Transverse colon (tissue), 4 donors: ENCODE measurements at regions of chr7 and their contacts with region 1.

Region 1: GRCh38 chr7:716636-717035 is 9.9 kb upstream of the DNAAF5 start:
- DNase-seq: no peak
- H3K4me3 ChIP-seq: no peak overlapping the region
- H3K27ac ChIP-seq: no peak overlapping the region
- H3K4me1 ChIP-seq: peaks cover 0 to 7% (median 6%) of the 10 kb centered on the region in 4 donors
- H3K27me3 ChIP-seq: peaks cover 10% of the 10 kb centered on the region
- CTCF ChIP-seq: no peak
- EP300 ChIP-seq: no peak
- POLR2A ChIP-seq: no peak

Region 2: DNA sequence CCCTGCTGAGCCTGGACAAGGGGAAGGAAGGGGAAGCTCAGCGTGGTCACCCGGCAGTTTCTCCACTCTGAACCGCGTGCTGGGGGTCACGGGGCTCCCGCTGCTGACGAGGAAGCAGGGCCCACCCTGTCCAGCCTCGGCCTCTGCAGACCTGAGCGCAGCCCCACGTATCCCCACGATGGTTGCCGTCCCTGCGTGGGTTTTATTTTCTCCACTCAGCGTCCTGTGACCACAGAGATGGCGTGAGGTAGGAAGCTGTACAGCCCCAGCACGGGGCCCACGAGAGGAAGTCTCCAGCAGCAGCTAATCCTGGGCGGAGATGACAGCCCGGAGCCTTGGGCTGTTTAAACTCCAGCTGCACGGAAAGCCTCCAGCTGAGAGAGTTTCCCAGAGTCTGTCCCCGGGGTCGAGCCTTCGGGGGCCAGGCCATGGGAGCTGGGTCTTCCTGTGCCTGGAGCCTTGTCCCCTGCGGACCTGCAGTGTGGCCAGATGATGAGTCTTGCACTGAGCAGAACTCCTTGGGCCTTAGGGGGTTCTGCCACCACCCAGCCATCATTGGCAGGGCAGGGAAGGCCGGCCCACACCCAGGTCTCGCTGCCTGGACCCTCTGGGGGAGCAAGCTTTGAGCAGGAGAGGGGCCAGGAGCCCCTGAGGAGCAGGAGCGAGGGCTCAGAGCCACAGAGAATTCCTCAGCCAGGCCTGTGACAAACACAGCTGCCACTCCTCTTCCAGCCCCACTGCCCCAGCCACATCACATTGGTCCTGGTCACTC is 597.1 kb before region 1 on chr7:
- in situ Hi-C with region 1: no loop called
- intact Hi-C with region 1: no loop called
- DNase-seq: peak; percentile 41
- H3K4me3 ChIP-seq: no peak overlapping the region
- H3K27ac ChIP-seq: peak overlapping the region; percentile 15 to 65 (median 32)
- H3K4me1 ChIP-seq: peaks cover 0 to 26% (median 5%) of the 10 kb centered on the region in 4 donors
- H3K27me3 ChIP-seq: peaks cover 19% of the 10 kb centered on the region
- CTCF ChIP-seq: no peak
- EP300 ChIP-seq: no peak
- POLR2A ChIP-seq: no peak

Region 3: GRCh38 chr7:341841-342638 is 374.6 kb before region 1 on chr7:
- in situ Hi-C with region 1: no loop called
- intact Hi-C with region 1: no loop called
- DNase-seq: peak; percentile 69
- H3K4me3 ChIP-seq: no peak overlapping the region
- H3K27ac ChIP-seq: peak overlapping the region; percentile 45 to 79 (median 74)
- H3K4me1 ChIP-seq: peaks cover 0 to 27% (median 21%) of the 10 kb centered on the region in 4 donors
- H3K27me3 ChIP-seq: no peaks in the 10 kb centered on the region
- CTCF ChIP-seq: peak in 1 of 5 experiments; percentile 10
- EP300 ChIP-seq: no peak
- POLR2A ChIP-seq: no peak

Region 4: GRCh38 chr7:568031-568951 is 148.3 kb before region 1 on chr7:
- in situ Hi-C with region 1: no loop called
- intact Hi-C with region 1: no loop called
- DNase-seq: no peak
- H3K4me3 ChIP-seq: no peak overlapping the region
- H3K27ac ChIP-seq: peak overlapping the region in 1 of 4 donors; percentile 34
- H3K4me1 ChIP-seq: no peaks in the 10 kb centered on the region
- H3K27me3 ChIP-seq: no peaks in the 10 kb centered on the region
- CTCF ChIP-seq: no peak
- EP300 ChIP-seq: no peak
- POLR2A ChIP-seq: no peak

Region 5: GRCh38 chr7:690478-691367 is 25.9 kb before region 1 on chr7:
- in situ Hi-C with region 1: no loop called
- intact Hi-C with region 1: loop called (anchors 1 kb)
- DNase-seq: peak; percentile 2
- H3K4me3 ChIP-seq: no peak overlapping the region
- H3K27ac ChIP-seq: no peak overlapping the region
- H3K4me1 ChIP-seq: no peaks in the 10 kb centered on the region
- H3K27me3 ChIP-seq: no peaks in the 10 kb centered on the region
- CTCF ChIP-seq: no peak
- EP300 ChIP-seq: no peak
- POLR2A ChIP-seq: no peak

Region 6: DNA sequence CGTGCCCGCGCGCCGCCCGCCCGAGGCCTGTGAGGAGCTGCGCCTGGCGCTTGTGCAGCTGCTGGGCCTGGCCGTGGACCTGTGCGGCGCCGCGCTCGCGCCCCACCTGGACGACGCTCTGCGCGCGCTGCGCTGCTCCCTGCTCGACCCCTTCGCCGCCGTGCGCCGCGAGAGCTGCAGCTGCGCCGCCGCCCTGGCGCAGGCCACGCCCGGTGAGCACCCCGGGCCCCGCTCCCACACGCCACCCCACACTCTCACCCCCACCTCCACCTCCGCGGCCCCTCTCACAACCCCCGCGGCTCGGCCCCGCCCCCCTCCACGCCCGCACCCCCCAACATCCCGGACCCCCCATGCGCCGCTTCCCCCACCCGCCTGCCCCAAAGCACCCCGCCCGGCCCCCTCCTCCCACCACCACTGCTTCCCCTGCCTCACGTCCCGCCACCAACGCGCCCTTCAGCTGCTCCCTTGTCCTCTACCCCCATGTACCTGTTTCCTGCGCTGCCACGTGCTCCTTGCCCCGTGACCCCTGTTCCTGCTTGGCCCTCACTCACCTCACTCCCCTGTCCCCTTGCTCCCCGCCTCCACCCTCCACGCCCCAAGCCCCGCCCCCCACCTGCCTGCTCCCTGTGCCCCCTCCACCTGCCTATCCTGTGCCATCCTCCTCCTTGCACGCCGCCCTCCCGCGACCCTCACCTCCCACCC is 10.6 kb after region 1 on chr7 and contains the start of gene PRKAR1B:
- in situ Hi-C with region 1: no loop called
- intact Hi-C with region 1: no loop called
- DNase-seq: peak; percentile 61
- H3K4me3 ChIP-seq: peak within 1 kb of the TSS; percentile 74 to 99 (median 91)
- H3K27ac ChIP-seq: peak within 1 kb of the TSS; percentile 70 to 89 (median 80)
- H3K4me1 ChIP-seq: peaks cover 0 to 40% (median 22%) of the 10 kb centered on the region in 4 donors
- H3K27me3 ChIP-seq: no peaks in the 10 kb centered on the region
- CTCF ChIP-seq: no peak
- EP300 ChIP-seq: no peak
- POLR2A ChIP-seq: no peak
- total RNA-seq, gene PRKAR1B: 15.7 to 53.9 (median 16.9) TPM